Naive thymus-derived CD4-positive, alpha-beta T cell (primary cell): ENCODE measurements at regions of chr1 and their contacts with region 1.

Region 1: DNA sequence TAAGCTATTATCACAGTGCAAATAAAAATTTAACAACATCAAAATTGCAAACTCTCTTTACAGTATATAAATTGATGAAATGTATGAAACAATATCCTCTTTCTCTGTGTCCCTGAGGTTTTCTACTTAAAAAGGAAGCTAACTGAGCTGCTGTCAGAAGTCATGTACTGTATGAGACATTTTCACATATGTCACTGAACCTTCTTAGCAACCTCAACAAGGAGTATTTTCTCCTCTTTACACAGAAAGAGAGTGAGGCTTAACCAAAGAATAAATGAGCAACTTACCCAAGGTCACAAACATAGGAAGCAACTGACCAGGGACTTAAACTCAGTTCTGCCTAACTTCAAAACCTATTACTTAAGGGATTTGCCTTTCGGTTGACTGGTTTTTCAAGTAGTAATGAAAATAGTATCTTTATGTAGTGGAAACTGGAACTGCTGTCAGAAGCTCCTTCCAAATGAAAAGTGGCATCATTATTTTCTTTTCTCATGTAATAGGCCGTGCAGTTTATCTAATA is 288.9 kb downstream of the LRRIQ3 start:
- DNase-seq: no peak
- ATAC-seq: no peak
- H3K4me3 ChIP-seq: no peak overlapping the region
- H3K4me3 Mint-ChIP-seq: no peak overlapping the region
- H3K27ac ChIP-seq: no peak overlapping the region
- H3K27ac Mint-ChIP-seq: no peak overlapping the region
- H3K4me1 ChIP-seq: no peaks in the 10 kb centered on the region
- H3K4me1 Mint-ChIP-seq: no peaks in the 10 kb centered on the region
- H3K27me3 ChIP-seq: no peaks in the 10 kb centered on the region
- H3K27me3 Mint-ChIP-seq: no peaks in the 10 kb centered on the region

Region 2: GRCh38 chr1:73930293-73930692 is 21.2 kb after region 1 on chr1:
- CTCF ChIA-PET with region 1: no interaction called
- POLR2A ChIA-PET with region 1: no interaction called
- intact Hi-C with region 1: loop called in 1 of 2 experiments (anchors 2 kb)
- DNase-seq: no peak
- ATAC-seq: no peak
- H3K4me3 ChIP-seq: no peak overlapping the region
- H3K4me3 Mint-ChIP-seq: no peak overlapping the region
- H3K27ac ChIP-seq: no peak overlapping the region
- H3K27ac Mint-ChIP-seq: no peak overlapping the region
- H3K4me1 ChIP-seq: no peaks in the 10 kb centered on the region
- H3K4me1 Mint-ChIP-seq: peaks cover 0 to 3% (median 0%) of the 10 kb centered on the region in 7 donors
- H3K27me3 ChIP-seq: no peaks in the 10 kb centered on the region
- H3K27me3 Mint-ChIP-seq: no peaks in the 10 kb centered on the region